AG04450 (cell line): ENCODE measurements at regions of chr10 and their contacts with region 1.

Region 1: GRCh38 chr10:90787393-90788198 is 70.2 kb downstream of the HTR7 start:
- DNase-seq: no peak
- H3K4me3 ChIP-seq: no peak overlapping the region
- H3K27ac ChIP-seq: no peak overlapping the region
- H3K27me3 ChIP-seq: peaks cover 6% of the 10 kb centered on the region
- CTCF ChIP-seq: peak; percentile 92

Region 2: GRCh38 chr10:89793649-89794254 is 993.8 kb before region 1 on chr10:
- CTCF ChIA-PET with region 1: interaction called, 12 read pairs
- POLR2A ChIA-PET with region 1: no interaction called
- DNase-seq: peak; percentile 55
- H3K4me3 ChIP-seq: no peak overlapping the region
- H3K27ac ChIP-seq: no peak overlapping the region
- H3K27me3 ChIP-seq: no peaks in the 10 kb centered on the region
- CTCF ChIP-seq: peak; percentile 86

Region 3: DNA sequence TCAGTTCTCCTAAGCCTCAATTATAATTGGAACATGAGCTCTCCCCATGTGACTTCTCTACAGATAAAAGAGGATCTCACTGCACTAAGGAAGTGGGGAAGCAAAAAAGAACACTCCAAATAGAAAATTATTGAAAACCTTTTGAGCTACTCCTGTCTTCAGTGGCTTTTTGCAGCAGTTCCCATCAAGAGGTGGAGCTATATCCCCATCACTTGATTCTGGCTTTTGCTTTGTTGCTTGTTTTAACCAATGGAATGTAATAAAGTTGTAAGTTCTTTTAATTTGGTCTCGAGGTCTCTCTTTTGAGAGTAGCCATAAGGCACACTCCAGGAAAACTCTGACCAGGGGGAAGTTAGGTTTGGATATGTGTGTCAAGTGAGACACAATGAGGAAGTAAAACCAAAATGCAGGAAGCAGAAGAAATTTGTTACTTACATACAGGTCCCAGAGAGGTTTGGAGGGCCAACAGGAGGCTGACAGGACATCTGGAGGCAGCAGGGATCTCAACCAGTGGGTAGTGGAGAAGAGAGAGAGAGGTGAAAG is 499.1 kb before region 1 on chr10:
- CTCF ChIA-PET with region 1: interaction called, 22 read pairs
- POLR2A ChIA-PET with region 1: no interaction called
- DNase-seq: peak; percentile 30
- H3K4me3 ChIP-seq: no peak overlapping the region
- H3K27ac ChIP-seq: no peak overlapping the region
- H3K27me3 ChIP-seq: no peaks in the 10 kb centered on the region
- CTCF ChIP-seq: peak; percentile 68

Region 4: GRCh38 chr10:90751107-90751997 is 36.2 kb before region 1 on chr10:
- CTCF ChIA-PET with region 1: interaction called, 21 read pairs
- POLR2A ChIA-PET with region 1: no interaction called
- DNase-seq: no peak
- H3K4me3 ChIP-seq: no peak overlapping the region
- H3K27ac ChIP-seq: no peak overlapping the region
- H3K27me3 ChIP-seq: no peaks in the 10 kb centered on the region
- CTCF ChIP-seq: peak; percentile 79

Region 5: GRCh38 chr10:90798482-90798881 is 10.9 kb after region 1 on chr10:
- CTCF ChIA-PET with region 1: interaction called, 13 read pairs
- POLR2A ChIA-PET with region 1: no interaction called
- DNase-seq: no peak
- H3K4me3 ChIP-seq: no peak overlapping the region
- H3K27ac ChIP-seq: no peak overlapping the region
- H3K27me3 ChIP-seq: no peaks in the 10 kb centered on the region
- CTCF ChIP-seq: no peak

Region 6: DNA sequence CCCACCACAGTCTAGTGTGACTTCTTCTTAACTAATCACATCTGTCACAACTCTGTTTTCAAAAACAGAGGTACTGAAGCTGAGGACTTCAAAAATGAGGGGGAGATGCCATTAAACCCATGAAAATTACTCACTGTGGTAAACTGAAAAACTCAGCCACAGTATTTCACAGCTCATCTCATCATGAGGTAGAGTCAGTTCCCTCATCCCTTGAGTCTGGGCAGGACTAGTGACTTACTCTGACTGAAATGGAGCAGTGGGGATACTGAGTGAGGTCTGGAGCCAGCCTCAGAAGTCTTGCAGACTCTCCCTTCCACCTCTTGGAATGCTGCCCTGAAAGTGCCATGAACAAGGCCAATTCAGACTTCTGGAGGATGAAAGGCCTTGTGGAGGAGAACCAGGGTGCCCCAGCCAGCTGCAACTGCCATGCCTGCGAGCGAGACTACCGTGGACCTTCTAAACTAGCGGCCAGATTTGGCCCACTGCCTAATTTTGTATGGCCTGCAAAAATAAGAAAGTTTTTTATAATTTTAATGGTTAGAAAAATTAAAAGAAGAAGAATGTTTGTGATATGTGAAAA is 158.0 kb after region 1 on chr10:
- CTCF ChIA-PET with region 1: no interaction called
- POLR2A ChIA-PET with region 1: no interaction called
- DNase-seq: no peak
- H3K4me3 ChIP-seq: no peak overlapping the region
- H3K27ac ChIP-seq: no peak overlapping the region
- H3K27me3 ChIP-seq: no peaks in the 10 kb centered on the region
- CTCF ChIP-seq: no peak